Activated CD4-positive, alpha-beta memory T cell treated with anti-CD3 and anti-CD28 coated beads for 36 hours (primary cell): ENCODE measurements at regions of chr1 and their contacts with region 1.

Region 1: GRCh38 chr1:155688324-155689080 is at the start of gene YY1AP1:
- DNase-seq: peak; percentile 93
- H3K4me3 Mint-ChIP-seq: peak within 1 kb of the TSS; percentile 97
- H3K27ac Mint-ChIP-seq: peak within 1 kb of the TSS; percentile 94
- H3K4me1 Mint-ChIP-seq: peaks cover 60% of the 10 kb centered on the region
- H3K27me3 Mint-ChIP-seq: no peaks in the 10 kb centered on the region
- total RNA-seq, gene YY1AP1: 56.2 to 62.1 TPM

Region 2: DNA sequence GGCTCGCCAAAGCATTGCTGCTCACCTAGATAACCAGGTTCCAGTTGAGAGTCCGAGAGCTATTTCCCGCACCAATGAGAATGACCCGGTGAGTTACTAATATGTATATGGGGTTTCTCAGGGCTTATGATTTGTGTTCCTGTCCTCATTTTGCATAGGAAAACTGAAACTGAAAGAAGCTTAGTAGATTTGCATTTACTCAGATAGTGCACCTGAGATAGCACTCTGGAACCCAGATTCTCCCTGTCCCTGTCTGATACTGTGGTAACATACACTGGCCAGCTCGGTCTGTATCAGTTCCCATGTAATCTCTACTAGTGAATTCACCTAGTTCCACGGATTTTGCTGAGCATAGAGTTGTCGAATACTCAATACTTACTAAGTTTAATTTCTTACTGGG is 28.5 kb after region 1 on chr1:
- CTCF ChIA-PET with region 1: no interaction called
- POLR2A ChIA-PET with region 1: no interaction called
- intact Hi-C with region 1: no loop called
- DNase-seq: no peak
- H3K4me3 Mint-ChIP-seq: no peak overlapping the region
- H3K27ac Mint-ChIP-seq: no peak overlapping the region
- H3K4me1 Mint-ChIP-seq: peaks cover 13% of the 10 kb centered on the region
- H3K27me3 Mint-ChIP-seq: no peaks in the 10 kb centered on the region

Region 3: GRCh38 chr1:155744711-155745283 is 56.3 kb after region 1 on chr1:
- CTCF ChIA-PET with region 1: no interaction called
- POLR2A ChIA-PET with region 1: no interaction called
- intact Hi-C with region 1: loop called (anchors 5 kb)
- DNase-seq: no peak
- H3K4me3 Mint-ChIP-seq: peak overlapping the region; percentile 90
- H3K27ac Mint-ChIP-seq: peak overlapping the region; percentile 83
- H3K4me1 Mint-ChIP-seq: peaks cover 3% of the 10 kb centered on the region
- H3K27me3 Mint-ChIP-seq: no peaks in the 10 kb centered on the region

Region 4: GRCh38 chr1:155911156-155912055 is 222.9 kb after region 1 on chr1 and contains the start of gene RIT1:
- CTCF ChIA-PET with region 1: no interaction called
- POLR2A ChIA-PET with region 1: no interaction called
- intact Hi-C with region 1: loop called (anchors 10 kb)
- DNase-seq: peak; percentile 90
- H3K4me3 Mint-ChIP-seq: peak within 1 kb of the TSS; percentile 97
- H3K27ac Mint-ChIP-seq: peak within 1 kb of the TSS; percentile 96
- H3K4me1 Mint-ChIP-seq: peaks cover 22% of the 10 kb centered on the region
- H3K27me3 Mint-ChIP-seq: no peaks in the 10 kb centered on the region
- total RNA-seq, gene RIT1: 19.1 to 21.1 TPM